ENCODE measurements at regions of chr3 and their contacts with region 1.

Region 1: GRCh38 chr3:112642912-112643506 is 2.1 kb upstream of the CCDC80 start:
- DNase-seq: peak; percentile 95
- ATAC-seq: peak; percentile 99
- H3K4me3 Mint-ChIP-seq: peak overlapping the region; percentile 42
- H3K27ac Mint-ChIP-seq: peak overlapping the region; percentile 88
- H3K4me1 Mint-ChIP-seq: peaks cover 38% of the 10 kb centered on the region
- H3K27me3 Mint-ChIP-seq: no peaks in the 10 kb centered on the region

Region 2: GRCh38 chr3:112653209-112653871 is 10.3 kb after region 1 on chr3:
- CTCF ChIA-PET with region 1: interaction called, 15 read pairs
- DNase-seq: no peak
- ATAC-seq: no peak
- H3K4me3 Mint-ChIP-seq: no peak overlapping the region
- H3K27ac Mint-ChIP-seq: no peak overlapping the region
- H3K4me1 Mint-ChIP-seq: peaks cover 15% of the 10 kb centered on the region
- H3K27me3 Mint-ChIP-seq: no peaks in the 10 kb centered on the region

Region 3: DNA sequence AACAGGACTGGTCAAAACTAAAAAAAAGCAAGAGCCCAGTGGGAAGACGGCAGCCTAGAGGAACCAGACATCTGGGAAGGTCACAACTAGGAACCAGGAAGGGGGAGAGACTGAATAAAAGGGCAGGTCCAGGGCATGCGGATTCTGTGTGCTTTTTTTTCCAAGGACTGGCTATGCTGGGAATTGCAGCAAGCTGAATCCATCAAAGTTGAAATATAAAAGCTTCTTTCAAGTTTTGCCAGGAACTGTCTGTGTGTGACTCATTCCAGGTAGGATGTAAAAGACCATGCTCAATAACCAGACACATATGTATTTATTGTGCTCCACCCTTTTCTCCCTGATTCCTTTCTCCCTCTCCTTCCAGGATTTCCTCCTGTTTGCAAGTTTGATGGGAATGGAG is 45.8 kb after region 1 on chr3:
- CTCF ChIA-PET with region 1: interaction called, 13 read pairs
- DNase-seq: no peak
- ATAC-seq: no peak
- H3K4me3 Mint-ChIP-seq: no peak overlapping the region
- H3K27ac Mint-ChIP-seq: peak overlapping the region; percentile 63
- H3K4me1 Mint-ChIP-seq: peaks cover 28% of the 10 kb centered on the region
- H3K27me3 Mint-ChIP-seq: peaks cover 9% of the 10 kb centered on the region

Region 4: DNA sequence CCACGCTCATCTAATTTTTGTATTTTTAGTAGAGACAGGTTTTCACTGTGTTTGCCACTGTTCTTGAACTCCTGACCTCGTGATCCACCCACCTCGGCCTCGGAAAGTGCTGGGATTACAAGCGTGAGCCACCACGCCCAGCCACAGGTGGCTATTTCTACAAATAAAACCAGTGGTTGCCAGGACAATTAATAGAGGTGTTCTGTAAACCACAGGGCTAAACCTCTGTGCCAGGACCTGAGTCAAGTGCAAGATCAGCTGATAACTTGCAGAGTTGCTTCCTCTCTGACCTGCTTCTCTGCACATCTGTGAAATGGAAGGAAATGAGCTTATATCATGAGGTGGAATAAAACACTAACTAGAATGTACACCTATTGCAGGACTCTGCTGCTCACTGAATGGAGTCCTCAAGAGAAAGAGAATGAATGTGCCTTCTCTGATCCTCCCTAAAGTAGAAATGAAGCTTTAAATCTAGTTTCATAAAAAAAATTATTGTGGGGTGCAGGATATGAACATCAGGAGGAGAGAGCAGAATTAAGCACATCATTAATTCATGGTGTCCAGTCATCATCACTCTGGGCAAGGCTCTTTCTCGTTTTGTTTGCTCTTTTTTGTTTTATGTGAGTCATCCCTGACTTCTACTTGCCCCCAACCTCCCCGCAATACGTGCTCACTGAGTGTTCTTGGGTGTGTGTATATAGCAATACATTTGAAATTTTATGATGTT is 131.0 kb after region 1 on chr3:
- CTCF ChIA-PET with region 1: interaction called, 10 read pairs
- DNase-seq: peak; percentile 64
- ATAC-seq: peak; percentile 79
- H3K4me3 Mint-ChIP-seq: no peak overlapping the region
- H3K27ac Mint-ChIP-seq: peak overlapping the region; percentile 58
- H3K4me1 Mint-ChIP-seq: peaks cover 36% of the 10 kb centered on the region
- H3K27me3 Mint-ChIP-seq: no peaks in the 10 kb centered on the region

Region 5: DNA sequence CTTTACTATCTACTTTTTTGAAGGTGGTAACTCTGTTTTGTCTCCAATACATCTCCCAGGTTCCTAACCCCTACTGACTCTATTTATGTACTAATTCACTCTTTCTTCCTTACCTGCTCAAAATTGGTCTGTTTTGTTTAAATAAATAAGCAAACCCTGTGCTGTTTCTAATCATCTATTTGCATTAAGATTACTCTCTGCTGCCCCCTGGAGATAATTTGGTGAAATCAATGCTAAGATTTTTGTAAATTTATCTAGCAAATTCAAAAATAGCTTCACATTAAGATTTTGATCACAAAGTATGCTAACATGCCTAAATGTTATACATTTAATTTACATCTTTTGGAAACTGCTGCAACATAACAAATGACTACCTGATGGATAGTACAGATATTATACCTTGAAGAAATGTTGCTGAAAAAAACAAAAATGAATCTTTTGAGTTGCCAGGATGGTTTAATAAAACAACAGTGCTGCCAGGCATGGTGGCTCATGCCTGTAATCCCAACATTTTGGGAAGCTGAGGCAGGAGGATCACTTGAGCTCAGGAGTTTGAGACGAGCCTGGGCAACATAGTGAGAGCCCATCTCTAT is 336.3 kb after region 1 on chr3:
- CTCF ChIA-PET with region 1: interaction called, 48 read pairs
- DNase-seq: no peak
- ATAC-seq: no peak
- H3K4me3 Mint-ChIP-seq: no peak overlapping the region
- H3K27ac Mint-ChIP-seq: no peak overlapping the region
- H3K4me1 Mint-ChIP-seq: peaks cover 53% of the 10 kb centered on the region
- H3K27me3 Mint-ChIP-seq: no peaks in the 10 kb centered on the region

Region 6: DNA sequence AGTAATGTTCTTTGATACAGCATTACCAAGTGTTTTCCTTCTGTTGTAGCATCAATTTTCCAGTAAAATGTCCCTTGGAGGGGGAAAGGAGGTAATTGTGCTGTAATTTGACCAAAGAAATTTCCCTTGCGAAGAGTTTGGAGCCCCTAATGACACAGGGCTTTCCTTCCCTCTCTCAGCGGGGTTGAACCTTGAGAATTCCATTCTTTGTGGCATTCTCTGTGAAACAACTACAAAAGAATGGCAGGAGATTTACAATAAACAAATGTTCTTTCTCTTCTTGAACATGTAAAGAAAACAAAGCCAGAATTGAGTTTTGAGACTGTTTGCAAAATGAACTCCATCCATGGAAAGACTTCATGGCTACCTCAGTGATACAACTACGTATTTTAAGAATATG is 942.7 kb after region 1 on chr3:
- CTCF ChIA-PET with region 1: no interaction called
- DNase-seq: no peak
- ATAC-seq: no peak
- H3K4me3 Mint-ChIP-seq: no peak overlapping the region
- H3K27ac Mint-ChIP-seq: no peak overlapping the region
- H3K4me1 Mint-ChIP-seq: no peaks in the 10 kb centered on the region
- H3K27me3 Mint-ChIP-seq: no peaks in the 10 kb centered on the region